Heart right ventricle (tissue), 16 donors: ENCODE measurements at regions of chr4 and their contacts with region 1.

Region 1: GRCh38 chr4:186015212-186015785 is 53.7 kb upstream of the TLR3 start:
- DNase-seq: peak in 1 of 2 donors; percentile 41
- ATAC-seq: peak; percentile 32 to 85 (median 70)
- H3K4me3 ChIP-seq: peak overlapping the region in 4 of 10 donors; percentile 7 to 13 (median 12)
- H3K27ac ChIP-seq: peak overlapping the region in 9 of 10 donors; percentile 28 to 82 (median 69)
- H3K4me1 ChIP-seq: peaks cover 0 to 13% (median 5%) of the 10 kb centered on the region in 9 donors
- H3K27me3 ChIP-seq: no peaks in the 10 kb centered on the region
- CTCF ChIP-seq: peak in 3 of 9 donors; percentile 35 to 46 (median 41)

Region 2: GRCh38 chr4:185640811-185641675 is 374.3 kb before region 1 on chr4:
- intact Hi-C with region 1: loop called in 8 of 10 experiments (anchors 2 to 5 kb)
- DNase-seq: no peak
- ATAC-seq: no peak
- H3K4me3 ChIP-seq: no peak overlapping the region
- H3K27ac ChIP-seq: no peak overlapping the region
- H3K4me1 ChIP-seq: peaks cover 0 to 40% (median 0%) of the 10 kb centered on the region in 9 donors
- H3K27me3 ChIP-seq: peaks cover 0 to 37% (median 0%) of the 10 kb centered on the region in 7 donors
- CTCF ChIP-seq: peak; percentile 10 to 71 (median 55)

Region 3: DNA sequence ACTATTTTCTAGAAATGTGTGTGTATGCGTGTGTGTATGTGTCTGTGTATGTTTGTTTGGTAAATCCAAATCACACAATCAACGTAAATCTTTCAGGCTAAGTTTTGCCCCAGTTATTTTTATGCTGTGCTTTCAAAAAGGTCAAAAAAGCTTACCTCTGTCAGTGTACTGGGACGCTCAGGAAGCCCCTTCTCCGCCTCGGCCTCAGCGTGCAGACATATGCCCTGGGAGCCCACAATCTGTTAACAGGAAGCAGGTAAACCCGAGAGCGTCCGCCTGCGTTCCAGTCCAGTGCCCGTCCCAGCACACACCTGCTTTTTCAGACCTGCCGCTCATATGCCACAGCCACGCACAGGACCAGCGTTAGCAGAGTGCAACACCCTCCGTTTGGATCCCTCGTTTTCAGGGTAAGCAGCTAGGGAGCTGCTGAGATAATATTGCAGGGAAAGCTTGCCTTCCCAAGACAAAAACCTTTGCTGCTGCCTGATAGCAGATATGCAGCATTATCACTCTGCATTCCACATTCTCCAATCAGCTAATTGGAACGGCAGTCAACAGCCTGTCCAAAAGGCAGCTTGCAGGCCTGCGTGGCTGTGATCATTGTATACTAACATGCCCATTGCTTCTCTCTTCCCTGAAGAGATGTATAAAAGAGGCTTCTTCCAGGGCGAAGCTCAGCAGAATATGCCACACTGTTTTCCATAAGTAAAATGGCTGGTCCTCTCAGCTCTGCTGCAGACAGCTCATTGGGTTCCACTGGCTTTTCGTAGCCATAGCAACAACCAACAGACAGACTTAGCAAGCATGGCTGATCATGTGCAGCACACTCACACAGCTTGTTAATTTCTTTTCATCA is 203.6 kb before region 1 on chr4 and contains the start of gene SORBS2:
- intact Hi-C with region 1: loop called in 1 of 10 experiments (anchors 10 kb)
- DNase-seq: peak; percentile 18 to 35
- ATAC-seq: peak; percentile 59 to 88 (median 78)
- H3K4me3 ChIP-seq: peak within 1 kb of the TSS; percentile 36 to 68 (median 55)
- H3K27ac ChIP-seq: peak within 1 kb of the TSS; percentile 75 to 91 (median 86)
- H3K4me1 ChIP-seq: peaks cover 0 to 11% (median 0%) of the 10 kb centered on the region in 9 donors
- H3K27me3 ChIP-seq: no peaks in the 10 kb centered on the region
- CTCF ChIP-seq: no peak
- total RNA-seq, gene SORBS2: 975 to 3,169 (median 1,932) TPM

Region 4: GRCh38 chr4:185865901-185866328 is 149.4 kb before region 1 on chr4:
- intact Hi-C with region 1: loop called in 2 of 10 experiments (anchors 5 to 10 kb)
- DNase-seq: no peak
- ATAC-seq: peak in 6 of 8 donors; percentile 50 to 85 (median 74)
- H3K4me3 ChIP-seq: no peak overlapping the region
- H3K27ac ChIP-seq: peak overlapping the region; percentile 53 to 89 (median 83)
- H3K4me1 ChIP-seq: peaks cover 0 to 67% (median 17%) of the 10 kb centered on the region in 9 donors
- H3K27me3 ChIP-seq: no peaks in the 10 kb centered on the region
- CTCF ChIP-seq: no peak

Region 5: GRCh38 chr4:185921583-185922555 is 93.4 kb before region 1 on chr4:
- intact Hi-C with region 1: loop called in 1 of 10 experiments (anchors 10 kb)
- DNase-seq: no peak
- ATAC-seq: peak in 7 of 8 donors; percentile 18 to 60 (median 48)
- H3K4me3 ChIP-seq: peak overlapping the region in 8 of 10 donors; percentile 1 to 48 (median 32)
- H3K27ac ChIP-seq: peak overlapping the region in 6 of 10 donors; percentile 5 to 46 (median 28)
- H3K4me1 ChIP-seq: peaks cover 3 to 26% (median 13%) of the 10 kb centered on the region in 9 donors
- H3K27me3 ChIP-seq: no peaks in the 10 kb centered on the region
- CTCF ChIP-seq: no peak